Right cardiac atrium (tissue), 5 donors: ENCODE measurements at regions of chr3 and their contacts with region 1.

Region 1: DNA sequence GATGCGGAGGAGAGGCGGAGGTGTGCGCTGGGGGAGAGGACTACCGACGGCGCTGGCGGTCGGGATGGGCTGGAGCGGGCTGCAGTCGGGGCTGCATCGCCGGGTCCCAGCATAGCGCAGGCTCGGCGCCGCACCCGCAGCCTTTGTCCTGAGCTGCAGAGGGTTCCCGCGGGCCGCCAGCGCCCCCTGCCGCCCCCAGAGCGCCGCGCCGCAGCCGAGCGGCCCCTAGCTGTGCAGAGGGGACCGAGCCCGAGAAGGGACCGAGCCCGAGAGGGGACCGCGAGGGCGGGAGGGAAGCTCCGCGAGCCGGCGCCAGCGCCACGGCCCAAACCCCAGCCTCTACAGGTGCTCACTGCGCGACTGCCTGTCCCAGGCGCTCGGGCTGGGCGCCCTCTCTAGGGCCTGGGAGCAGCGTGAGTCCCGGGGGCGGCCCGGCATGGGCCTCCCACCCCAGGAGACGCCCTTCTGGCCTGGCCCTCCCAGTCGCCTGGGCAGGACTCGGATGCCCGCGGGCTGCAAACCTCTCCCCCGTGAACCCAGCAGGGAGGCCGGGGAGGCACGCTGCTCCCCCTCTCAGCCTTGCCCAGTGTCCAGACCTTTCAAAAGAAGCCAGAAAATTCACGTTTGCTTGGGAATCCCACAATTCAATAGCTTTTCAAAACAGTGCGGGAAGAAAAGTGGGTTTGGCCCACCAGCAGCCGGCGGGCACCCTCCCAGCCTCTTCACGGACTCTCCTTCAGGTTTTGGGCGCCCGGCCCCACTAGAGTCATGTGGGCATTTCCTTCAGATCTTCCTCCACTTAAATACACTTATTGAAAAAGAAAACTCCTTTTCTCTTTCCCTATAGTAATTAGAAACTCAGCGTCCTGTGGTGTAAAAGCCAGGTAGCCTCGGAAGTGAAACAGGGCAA is 134.7 kb downstream of the TPRA1 start:
- DNase-seq: peak; percentile 75 to 89 (median 89)
- ATAC-seq: peak; percentile 89 to 94
- H3K4me3 ChIP-seq: peak overlapping the region; percentile 19
- H3K27ac ChIP-seq: no peak overlapping the region
- H3K4me1 ChIP-seq: no peaks in the 10 kb centered on the region
- H3K27me3 ChIP-seq: no peaks in the 10 kb centered on the region

Region 2: GRCh38 chr3:126685041-126685440 is 770.8 kb before region 1 on chr3:
- intact Hi-C with region 1: loop called in 2 of 4 experiments (anchors 5 kb)
- DNase-seq: no peak
- ATAC-seq: no peak
- H3K4me3 ChIP-seq: no peak overlapping the region
- H3K27ac ChIP-seq: no peak overlapping the region
- H3K4me1 ChIP-seq: no peaks in the 10 kb centered on the region
- H3K27me3 ChIP-seq: no peaks in the 10 kb centered on the region

Region 3: DNA sequence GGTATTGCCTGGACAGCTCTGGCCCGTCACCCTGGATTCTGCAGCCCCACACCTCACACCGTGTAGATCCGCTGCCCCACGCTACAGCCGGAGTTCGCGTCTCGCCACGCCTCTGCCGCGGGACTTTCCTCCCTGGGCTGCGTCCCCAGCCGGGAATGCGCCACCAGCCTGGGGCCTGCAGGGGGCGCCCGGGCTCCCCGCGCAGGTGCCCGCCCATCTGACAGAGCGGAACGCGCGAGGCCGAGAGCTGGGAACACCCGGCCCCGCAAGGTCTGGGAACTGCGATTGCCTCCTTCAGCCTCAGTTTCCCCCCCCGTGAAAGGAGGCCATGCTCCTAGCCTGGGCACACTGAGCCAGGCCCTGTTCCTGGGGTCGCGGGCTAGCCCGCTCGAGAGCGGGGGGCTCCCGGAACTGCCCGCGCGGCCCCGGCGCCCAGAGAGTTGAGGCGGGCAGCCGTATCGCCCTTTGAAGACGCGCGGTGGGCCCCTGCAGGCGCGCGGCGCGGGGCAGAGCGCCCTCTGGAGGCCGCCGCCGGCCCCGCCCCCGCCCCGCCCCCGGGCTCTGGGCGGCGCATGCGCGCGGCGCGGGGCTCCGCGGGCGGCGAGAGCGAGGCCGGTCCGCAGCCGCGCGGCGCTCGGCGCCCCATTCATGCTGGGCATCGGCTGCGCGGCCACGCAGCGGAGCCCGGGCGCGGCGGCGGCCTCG is 473.2 kb before region 1 on chr3 and contains the start of gene PLXNA1:
- intact Hi-C with region 1: loop called in 1 of 4 experiments (anchors 10 kb)
- DNase-seq: peak; percentile 84 to 95 (median 93)
- ATAC-seq: peak; percentile 86
- H3K4me3 ChIP-seq: peak within 1 kb of the TSS; percentile 95
- H3K27ac ChIP-seq: peak within 1 kb of the TSS; percentile 69
- H3K4me1 ChIP-seq: peaks cover 3% of the 10 kb centered on the region
- H3K27me3 ChIP-seq: no peaks in the 10 kb centered on the region
- total RNA-seq, gene PLXNA1: 12.8 to 17.8 (median 15.2) TPM

Region 4: DNA sequence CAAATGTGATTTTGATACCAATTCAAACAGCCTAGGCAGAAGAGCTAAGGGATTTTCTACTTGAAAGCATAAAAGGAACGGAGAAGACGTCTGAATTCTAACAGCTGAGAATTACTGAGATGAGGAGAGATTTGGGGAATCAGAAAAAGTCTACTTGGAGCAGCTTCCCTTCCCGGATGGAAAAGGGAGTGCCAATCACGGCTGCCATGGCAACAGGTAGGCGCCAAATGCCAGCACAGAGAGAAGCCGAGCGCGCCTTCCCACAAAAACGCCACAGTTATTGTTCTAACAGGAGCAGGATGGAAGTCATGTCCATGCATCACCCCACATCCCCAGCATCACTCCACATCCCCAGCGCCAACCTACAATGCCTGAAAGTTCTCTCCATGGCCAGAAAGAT is 104.5 kb before region 1 on chr3:
- intact Hi-C with region 1: no loop called
- DNase-seq: no peak
- ATAC-seq: no peak
- H3K4me3 ChIP-seq: no peak overlapping the region
- H3K27ac ChIP-seq: no peak overlapping the region
- H3K4me1 ChIP-seq: no peaks in the 10 kb centered on the region
- H3K27me3 ChIP-seq: no peaks in the 10 kb centered on the region